HCT116 (cell line): ENCODE measurements at regions of chr7 and their contacts with region 1.

Region 1: DNA sequence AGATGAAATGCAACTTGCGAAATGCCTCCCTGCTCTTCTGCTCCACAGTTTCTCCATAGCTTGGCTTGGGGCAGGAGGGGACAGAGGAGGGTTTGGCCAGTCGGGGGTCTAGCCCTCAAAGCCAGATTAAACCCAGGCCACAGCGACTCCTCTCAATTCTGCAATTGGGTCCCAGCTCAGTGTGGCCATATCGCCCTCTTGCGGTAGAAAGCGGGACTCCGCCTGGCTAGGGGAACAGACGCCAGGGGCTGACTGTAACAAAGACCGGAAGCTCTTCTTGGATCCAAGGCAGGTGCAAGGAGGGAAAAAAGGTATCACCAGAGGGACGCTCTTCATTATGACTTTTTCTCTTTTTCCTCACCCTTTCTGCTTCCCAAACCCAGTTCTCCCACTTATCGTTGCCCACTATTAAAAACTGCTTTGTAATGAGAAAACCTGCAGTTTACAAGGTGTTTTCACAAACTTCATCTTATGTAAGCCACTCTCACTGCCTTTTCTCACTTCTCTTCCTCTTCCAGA is 36.6 kb upstream of the TNPO3 start:
- DNase-seq: peak; percentile 54
- ATAC-seq: peak; percentile 99
- H3K4me3 ChIP-seq: no peak overlapping the region
- H3K27ac ChIP-seq: no peak overlapping the region
- H3K4me1 ChIP-seq: peaks cover 0 to 6% of the 10 kb centered on the region in 2 experiments; a peak in 2 of 4 replicates
- H3K27me3 ChIP-seq: no peaks in the 10 kb centered on the region
- CTCF ChIP-seq: peak; percentile 97 to 99 (median 99)
- POLR2A ChIP-seq: no peak
- RAD21 ChIP-seq: peak; percentile 97

Region 2: GRCh38 chr7:128862571-128863432 is 228.7 kb before region 1 on chr7 and contains the start of gene ATP6V1F:
- CTCF ChIA-PET with region 1: interaction called, 11 read pairs
- POLR2A ChIA-PET with region 1: no interaction called
- RAD21 ChIA-PET with region 1: no interaction called
- intact Hi-C with region 1: no loop called
- DNase-seq: peak; percentile 95
- ATAC-seq: peak; percentile 88
- H3K4me3 ChIP-seq: peak within 1 kb of the TSS; percentile 79 to 96
- H3K27ac ChIP-seq: peak within 1 kb of the TSS; percentile 53
- H3K4me1 ChIP-seq: peaks cover 10 to 20% of the 10 kb centered on the region in 2 experiments; a peak in 3 of 4 replicates
- H3K27me3 ChIP-seq: no peaks in the 10 kb centered on the region
- CTCF ChIP-seq: no peak
- POLR2A ChIP-seq: peak; percentile 71
- RAD21 ChIP-seq: no peak
- total RNA-seq, gene ATP6V1F: 149 TPM

Region 3: GRCh38 chr7:128904381-128905197 is 187.0 kb before region 1 on chr7:
- CTCF ChIA-PET with region 1: interaction called, 6 read pairs
- POLR2A ChIA-PET with region 1: no interaction called
- RAD21 ChIA-PET with region 1: no interaction called
- intact Hi-C with region 1: loop called (anchors 1 kb)
- DNase-seq: peak; percentile 52
- ATAC-seq: peak; percentile 78
- H3K4me3 ChIP-seq: no peak overlapping the region
- H3K27ac ChIP-seq: no peak overlapping the region
- H3K4me1 ChIP-seq: peaks cover 7 to 27% of the 10 kb centered on the region in 2 experiments
- H3K27me3 ChIP-seq: no peaks in the 10 kb centered on the region
- CTCF ChIP-seq: peak; percentile 63 to 82 (median 76)
- POLR2A ChIP-seq: no peak
- RAD21 ChIP-seq: peak; percentile 79

Region 4: DNA sequence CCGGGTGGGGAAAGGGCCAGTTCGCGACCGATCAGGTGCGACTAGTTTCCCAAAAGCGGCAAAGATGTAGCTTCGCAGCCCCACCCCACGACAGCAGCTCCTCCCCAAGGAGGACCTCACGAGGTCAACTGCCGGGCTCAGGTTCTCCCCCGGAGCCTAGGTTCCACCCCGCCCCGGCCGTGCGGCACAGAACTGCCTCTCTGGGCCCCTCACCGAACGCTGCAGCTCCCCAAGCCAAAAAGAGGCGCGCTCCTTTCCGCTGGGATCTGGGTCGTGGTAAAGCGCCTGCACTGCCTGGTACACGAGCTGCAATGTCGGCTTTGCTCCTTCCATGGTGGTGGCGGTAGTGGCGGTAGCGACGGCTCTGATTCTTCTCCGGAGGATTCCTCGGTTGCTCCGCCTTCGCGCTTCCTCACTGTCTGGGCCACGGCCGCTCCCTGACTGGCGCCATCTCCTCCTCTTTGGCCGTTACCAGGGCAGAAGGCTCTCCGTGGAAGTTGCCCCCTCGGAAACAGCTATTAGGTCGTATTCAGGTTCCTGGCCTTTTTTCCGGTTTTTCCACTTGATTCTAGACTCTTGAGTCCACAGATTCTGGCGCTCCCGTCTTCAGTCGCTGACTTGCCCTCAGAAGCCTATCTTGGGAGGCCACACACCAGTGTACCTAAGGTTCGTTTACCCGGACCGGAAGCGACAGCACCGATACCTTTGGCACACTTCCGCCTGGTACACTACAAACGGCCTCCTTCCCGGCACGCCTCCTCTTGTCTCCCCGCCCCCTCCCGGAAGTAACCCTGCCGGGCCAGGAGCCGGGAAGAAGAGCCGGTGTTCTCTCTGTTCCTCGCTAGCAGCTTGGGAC is 36.9 kb before region 1 on chr7 and contains the start of gene TNPO3:
- CTCF ChIA-PET with region 1: interaction called, 7 read pairs
- POLR2A ChIA-PET with region 1: interaction called, 6 read pairs
- RAD21 ChIA-PET with region 1: no interaction called
- intact Hi-C with region 1: loop called (anchors 1 kb)
- DNase-seq: peak; percentile 90
- ATAC-seq: peak; percentile 87
- H3K4me3 ChIP-seq: peak within 1 kb of the TSS; percentile 95 to 98
- H3K27ac ChIP-seq: peak within 1 kb of the TSS; percentile 91
- H3K4me1 ChIP-seq: peaks cover 3 to 14% of the 10 kb centered on the region in 2 experiments; a peak in 3 of 4 replicates
- H3K27me3 ChIP-seq: no peaks in the 10 kb centered on the region
- CTCF ChIP-seq: no peak
- POLR2A ChIP-seq: peak; percentile 75
- RAD21 ChIP-seq: no peak
- total RNA-seq, gene TNPO3: 58.5 TPM

Region 5: GRCh38 chr7:129078455-129078854 is 13.1 kb before region 1 on chr7:
- CTCF ChIA-PET with region 1: interaction called, 10 read pairs
- POLR2A ChIA-PET with region 1: no interaction called
- RAD21 ChIA-PET with region 1: no interaction called
- intact Hi-C with region 1: no loop called
- DNase-seq: no peak
- ATAC-seq: no peak
- H3K4me3 ChIP-seq: no peak overlapping the region
- H3K27ac ChIP-seq: no peak overlapping the region
- H3K4me1 ChIP-seq: no peaks in the 10 kb centered on the region
- H3K27me3 ChIP-seq: no peaks in the 10 kb centered on the region
- CTCF ChIP-seq: no peak
- POLR2A ChIP-seq: no peak
- RAD21 ChIP-seq: no peak